Vagina (tissue), 2 donors: ENCODE measurements at regions of chr3 and their contacts with region 1.

Region 1: DNA sequence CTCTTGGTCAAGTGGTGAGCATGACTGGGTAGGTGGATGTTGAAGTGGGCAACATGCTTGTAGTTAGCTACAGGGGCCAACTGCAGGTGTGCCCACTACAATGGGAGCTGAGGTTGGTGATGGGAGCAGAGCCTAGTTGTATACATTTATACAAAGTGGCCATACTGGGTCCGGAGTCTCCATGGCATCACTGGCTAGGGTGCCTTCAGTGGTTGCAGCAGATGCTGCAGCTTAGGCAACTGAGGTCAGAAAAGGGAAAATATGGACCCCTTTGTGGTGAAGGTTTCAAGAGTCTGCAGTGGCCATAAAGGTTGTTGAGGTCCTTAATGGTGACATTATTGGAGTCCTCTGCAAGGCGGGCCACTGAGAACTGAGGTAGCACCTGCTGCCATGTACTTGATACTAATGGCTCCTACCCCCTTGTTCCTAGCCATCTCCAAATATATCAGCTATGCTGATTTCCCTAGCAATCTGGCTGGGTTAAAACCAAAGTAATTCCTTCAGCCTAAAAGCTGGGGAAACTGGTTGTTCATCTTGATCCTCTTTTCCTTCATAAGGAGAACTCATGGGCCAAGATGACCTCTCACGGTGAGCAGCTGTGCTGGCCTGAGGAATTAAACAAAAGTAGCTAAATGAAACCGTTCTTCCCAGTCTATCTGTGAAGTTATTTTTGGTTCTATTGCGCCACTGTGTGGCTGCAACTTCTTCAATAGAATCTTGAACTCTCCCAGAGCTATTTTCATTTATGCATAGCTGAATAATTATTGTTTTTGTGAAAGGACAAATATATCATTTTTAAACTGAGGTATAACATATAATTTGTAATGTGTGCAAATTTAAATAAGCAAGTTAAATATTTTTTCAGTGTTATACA is 76.0 kb upstream of the PLSCR4 start:
- DNase-seq: no peak
- H3K4me3 ChIP-seq: no peak overlapping the region
- H3K27ac ChIP-seq: no peak overlapping the region
- H3K4me1 ChIP-seq: peaks cover 4% of the 10 kb centered on the region
- H3K27me3 ChIP-seq: no peaks in the 10 kb centered on the region
- CTCF ChIP-seq: peak; percentile 49 to 72 (median 58)
- POLR2A ChIP-seq: no peak

Region 2: DNA sequence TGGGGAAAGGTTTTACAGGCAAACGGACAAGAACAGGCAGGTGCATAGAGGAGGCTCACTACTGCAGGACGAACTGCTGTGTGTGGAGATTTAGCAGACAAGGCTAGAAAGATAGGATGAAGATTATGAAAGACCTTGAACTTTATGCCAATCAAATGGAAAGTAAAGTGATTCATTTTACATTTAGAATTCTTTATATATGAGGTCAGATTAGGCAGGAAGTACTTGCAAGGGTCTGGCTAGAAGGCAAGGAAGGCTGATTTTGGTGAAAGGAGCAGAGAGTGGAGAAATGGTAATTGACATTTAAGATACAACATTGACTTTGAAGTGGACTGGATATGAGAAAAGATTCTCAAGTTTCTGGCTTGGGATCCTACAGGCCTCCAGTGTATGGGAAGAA is 109.6 kb before region 1 on chr3:
- intact Hi-C with region 1: loop called (anchors 1 kb)
- DNase-seq: no peak
- H3K4me3 ChIP-seq: no peak overlapping the region
- H3K27ac ChIP-seq: no peak overlapping the region
- H3K4me1 ChIP-seq: no peaks in the 10 kb centered on the region
- H3K27me3 ChIP-seq: no peaks in the 10 kb centered on the region
- CTCF ChIP-seq: no peak
- POLR2A ChIP-seq: no peak